Common myeloid progenitor, CD34-positive (primary cell): ENCODE measurements at regions of chr6 and their contacts with region 1.

Region 1: DNA sequence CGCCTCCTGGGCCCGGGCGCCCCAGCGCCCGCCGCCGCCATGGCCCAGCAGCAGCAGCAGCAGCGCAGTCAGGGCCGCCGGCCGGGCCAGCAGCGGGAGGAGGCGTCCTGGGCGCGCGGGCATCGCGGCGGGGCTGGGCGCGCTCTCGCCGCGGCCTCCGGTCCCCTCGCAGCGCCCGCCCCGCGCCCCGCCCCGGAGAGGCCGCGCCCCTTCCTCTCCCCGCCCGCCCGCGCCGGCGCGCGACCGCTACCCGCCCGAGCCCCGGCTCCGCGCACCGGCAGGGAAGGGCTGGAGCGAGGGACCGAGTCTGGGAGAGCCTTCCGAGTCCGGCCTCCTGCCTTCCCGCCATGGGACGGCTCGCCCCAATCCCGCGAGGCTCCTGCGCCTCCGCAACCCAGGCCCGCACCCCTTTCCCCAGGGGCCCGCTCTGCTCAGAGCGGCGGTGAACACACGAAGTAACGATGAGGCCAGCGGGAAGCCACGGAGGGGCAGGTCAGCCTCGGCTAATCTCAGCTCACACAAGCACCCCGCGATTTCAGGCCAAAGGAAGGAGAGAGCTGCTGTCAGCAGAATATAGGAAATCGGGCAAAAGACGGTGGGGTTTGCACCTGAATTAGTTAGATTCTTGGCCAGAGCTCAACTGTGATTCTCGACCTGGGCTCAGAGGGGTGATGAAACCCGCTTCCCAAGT is at the start of gene TXNDC5:
- DNase-seq: peak; percentile 51 to 72 (median 58)
- H3K4me3 ChIP-seq: peak within 1 kb of the TSS; percentile 54 to 86 (median 72)
- H3K27ac ChIP-seq: peak within 1 kb of the TSS in 1 of 2 experiments; percentile 49
- H3K4me1 ChIP-seq: peaks cover 3 to 39% (median 21%) of the 10 kb centered on the region in 4 experiments
- H3K27me3 ChIP-seq: peaks cover 0 to 6% (median 0%) of the 10 kb centered on the region in 5 experiments

Region 2: DNA sequence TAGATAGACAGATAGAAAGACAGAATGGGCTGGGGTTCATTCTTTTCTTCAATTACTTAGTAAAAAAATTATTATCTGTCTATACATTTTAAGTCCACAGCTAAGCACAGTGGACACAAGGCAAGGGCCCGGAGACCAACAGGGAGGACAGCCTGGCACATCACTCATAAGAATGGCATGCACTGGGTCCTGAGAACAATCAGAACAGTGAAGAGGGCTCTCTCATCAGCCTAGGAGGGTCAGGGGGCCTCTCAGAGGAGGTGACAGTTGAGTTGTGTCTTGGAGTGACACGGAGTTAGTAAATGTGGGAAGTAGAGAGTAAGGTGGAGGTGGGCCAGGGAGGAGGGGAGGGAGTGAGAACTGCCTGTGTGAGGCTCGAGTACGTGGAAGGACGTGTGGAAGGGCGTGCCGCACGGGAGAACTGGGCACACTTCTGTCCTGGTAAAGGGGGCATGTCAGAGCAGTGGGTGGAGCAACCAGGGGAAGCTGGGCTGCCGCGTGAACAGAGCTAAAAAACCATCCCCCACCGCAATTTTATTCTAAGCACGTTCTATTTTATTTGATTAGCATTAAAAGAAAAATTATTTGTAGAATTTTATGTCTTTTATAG is 414.4 kb before region 1 on chr6:
- CTCF ChIA-PET with region 1: no interaction called
- POLR2A ChIA-PET with region 1: no interaction called
- DNase-seq: no peak
- H3K4me3 ChIP-seq: no peak overlapping the region
- H3K27ac ChIP-seq: no peak overlapping the region
- H3K4me1 ChIP-seq: no peaks in the 10 kb centered on the region
- H3K27me3 ChIP-seq: peaks cover 0 to 3% (median 0%) of the 10 kb centered on the region in 5 experiments

Region 3: GRCh38 chr6:7640607-7641577 is 269.9 kb before region 1 on chr6:
- CTCF ChIA-PET with region 1: no interaction called
- POLR2A ChIA-PET with region 1: no interaction called
- DNase-seq: no peak
- H3K4me3 ChIP-seq: no peak overlapping the region
- H3K27ac ChIP-seq: no peak overlapping the region
- H3K4me1 ChIP-seq: no peaks in the 10 kb centered on the region
- H3K27me3 ChIP-seq: peaks cover 0 to 3% (median 0%) of the 10 kb centered on the region in 5 experiments

Region 4: GRCh38 chr6:7891078-7891872 is 19.5 kb before region 1 on chr6:
- CTCF ChIA-PET with region 1: no interaction called
- POLR2A ChIA-PET with region 1: no interaction called
- DNase-seq: no peak
- H3K4me3 ChIP-seq: no peak overlapping the region
- H3K27ac ChIP-seq: no peak overlapping the region
- H3K4me1 ChIP-seq: no peaks in the 10 kb centered on the region
- H3K27me3 ChIP-seq: no peaks in the 10 kb centered on the region

Region 5: GRCh38 chr6:7992002-7992815 is 81.4 kb after region 1 on chr6:
- CTCF ChIA-PET with region 1: interaction called, 13 read pairs
- POLR2A ChIA-PET with region 1: no interaction called
- DNase-seq: peak; percentile 50 to 69 (median 62)
- H3K4me3 ChIP-seq: no peak overlapping the region
- H3K27ac ChIP-seq: no peak overlapping the region
- H3K4me1 ChIP-seq: no peaks in the 10 kb centered on the region
- H3K27me3 ChIP-seq: no peaks in the 10 kb centered on the region